Mucosa of descending colon (tissue), 3 donors: ENCODE measurements at regions of chr1 and their contacts with region 1.

Region 1: GRCh38 chr1:244599937-244600350 is 53.0 kb upstream of the DESI2 start:
- DNase-seq: peak in 1 of 3 donors; percentile 12
- ATAC-seq: peak; percentile 92
- H3K4me3 ChIP-seq: no peak overlapping the region
- H3K4me1 ChIP-seq: no peaks in the 10 kb centered on the region
- CTCF ChIP-seq: no peak

Region 2: GRCh38 chr1:244381878-244382565 is 217.9 kb before region 1 on chr1:
- intact Hi-C with region 1: no loop called
- DNase-seq: no peak
- ATAC-seq: no peak
- H3K4me3 ChIP-seq: no peak overlapping the region
- H3K4me1 ChIP-seq: no peaks in the 10 kb centered on the region
- CTCF ChIP-seq: no peak

Region 3: DNA sequence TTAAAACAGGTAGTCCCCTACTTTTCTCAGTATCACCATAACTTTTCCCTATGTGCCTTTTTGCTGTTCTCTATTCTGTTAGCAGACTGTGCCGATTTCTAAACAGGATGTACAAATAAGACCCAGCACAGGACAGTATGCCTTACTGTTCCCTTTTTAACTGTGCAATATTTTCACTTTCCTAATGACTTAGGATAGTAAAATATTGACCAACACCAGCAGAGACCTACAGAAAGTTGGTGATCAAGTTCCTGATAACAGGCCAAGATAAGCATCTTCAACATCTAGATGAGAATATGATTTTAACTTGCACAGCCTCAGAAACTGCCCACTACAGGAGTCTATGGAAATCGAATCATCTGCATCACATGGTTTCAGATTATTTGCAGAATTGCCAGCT is 190.2 kb before region 1 on chr1:
- intact Hi-C with region 1: no loop called
- DNase-seq: no peak
- ATAC-seq: no peak
- H3K4me3 ChIP-seq: no peak overlapping the region
- H3K4me1 ChIP-seq: no peaks in the 10 kb centered on the region
- CTCF ChIP-seq: no peak

Region 4: GRCh38 chr1:244796718-244797406 is 196.9 kb after region 1 on chr1:
- intact Hi-C with region 1: loop called (anchors 5 kb)
- DNase-seq: peak in 1 of 3 donors; percentile 87
- ATAC-seq: peak; percentile 83
- H3K4me3 ChIP-seq: no peak overlapping the region
- H3K4me1 ChIP-seq: no peaks in the 10 kb centered on the region
- CTCF ChIP-seq: no peak

Region 5: GRCh38 chr1:245605480-245606161 is 1005.7 kb after region 1 on chr1:
- intact Hi-C with region 1: no loop called
- DNase-seq: no peak
- ATAC-seq: peak; percentile 35
- H3K4me3 ChIP-seq: no peak overlapping the region
- H3K4me1 ChIP-seq: no peaks in the 10 kb centered on the region
- CTCF ChIP-seq: no peak